WTC11 (cell line): ENCODE measurements at regions of chr2 and their contacts with region 1.

Region 1: GRCh38 chr2:238139196-238140039 is 950 bp downstream of the KLHL30 start:
- DNase-seq: peak; percentile 64
- ATAC-seq: peak; percentile 64
- H3K4me3 Mint-ChIP-seq: no peak overlapping the region
- H3K27ac Mint-ChIP-seq: no peak overlapping the region
- H3K4me1 Mint-ChIP-seq: no peaks in the 10 kb centered on the region
- H3K27me3 Mint-ChIP-seq: no peaks in the 10 kb centered on the region
- CTCF ChIP-seq: peak; percentile 97

Region 2: DNA sequence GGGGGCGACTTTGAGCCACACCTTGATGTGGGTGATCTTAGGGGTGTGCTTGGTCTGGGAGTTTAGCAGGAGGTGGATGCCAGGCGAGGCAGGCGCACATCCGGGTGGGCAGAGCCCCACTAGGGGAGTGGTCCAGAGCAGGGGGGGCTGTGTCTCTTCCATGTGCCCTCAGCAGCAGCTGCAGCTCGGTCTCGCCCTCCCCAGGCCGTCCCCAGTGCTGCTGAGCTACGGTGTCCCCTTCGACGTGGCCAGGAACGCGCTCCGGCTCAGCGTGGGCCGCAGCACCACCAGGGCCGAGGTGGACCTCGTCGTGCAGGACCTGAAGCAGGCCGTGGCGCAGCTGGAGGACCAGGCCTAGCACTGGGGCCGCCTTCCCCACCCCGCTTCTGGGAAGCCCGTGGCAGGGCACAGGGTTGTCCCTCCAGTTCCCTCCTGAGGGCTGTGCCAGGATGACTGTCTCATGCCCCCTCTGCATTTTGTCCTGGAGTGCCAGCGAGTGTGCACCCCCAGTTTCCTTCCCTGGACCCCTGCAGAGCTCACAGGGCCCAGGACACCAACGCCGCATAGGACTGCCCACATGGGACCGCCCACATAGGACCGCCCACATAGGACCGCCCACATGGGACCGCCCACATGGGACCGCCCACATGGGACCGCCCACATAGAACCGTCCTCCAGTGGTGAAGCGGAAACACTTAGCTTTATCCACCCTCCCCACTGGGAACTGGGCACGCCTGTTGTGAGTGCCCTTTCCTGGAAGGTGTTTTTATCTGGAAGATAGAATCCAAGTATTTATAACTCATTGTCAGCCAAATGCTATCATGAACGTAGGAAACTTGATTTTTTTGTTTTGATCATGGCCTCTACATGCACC is 41.2 kb before region 1 on chr2:
- CTCF ChIA-PET with region 1: interaction called, 12 read pairs
- POLR2A ChIA-PET with region 1: interaction called, 3 read pairs
- DNase-seq: peak; percentile 81
- ATAC-seq: peak; percentile 79
- H3K4me3 Mint-ChIP-seq: no peak overlapping the region
- H3K27ac Mint-ChIP-seq: peak overlapping the region; percentile 63; the same call in 1 of the 2 replicates
- H3K4me1 Mint-ChIP-seq: peaks cover 43% of the 10 kb centered on the region
- H3K27me3 Mint-ChIP-seq: no peaks in the 10 kb centered on the region
- CTCF ChIP-seq: no peak

Region 3: DNA sequence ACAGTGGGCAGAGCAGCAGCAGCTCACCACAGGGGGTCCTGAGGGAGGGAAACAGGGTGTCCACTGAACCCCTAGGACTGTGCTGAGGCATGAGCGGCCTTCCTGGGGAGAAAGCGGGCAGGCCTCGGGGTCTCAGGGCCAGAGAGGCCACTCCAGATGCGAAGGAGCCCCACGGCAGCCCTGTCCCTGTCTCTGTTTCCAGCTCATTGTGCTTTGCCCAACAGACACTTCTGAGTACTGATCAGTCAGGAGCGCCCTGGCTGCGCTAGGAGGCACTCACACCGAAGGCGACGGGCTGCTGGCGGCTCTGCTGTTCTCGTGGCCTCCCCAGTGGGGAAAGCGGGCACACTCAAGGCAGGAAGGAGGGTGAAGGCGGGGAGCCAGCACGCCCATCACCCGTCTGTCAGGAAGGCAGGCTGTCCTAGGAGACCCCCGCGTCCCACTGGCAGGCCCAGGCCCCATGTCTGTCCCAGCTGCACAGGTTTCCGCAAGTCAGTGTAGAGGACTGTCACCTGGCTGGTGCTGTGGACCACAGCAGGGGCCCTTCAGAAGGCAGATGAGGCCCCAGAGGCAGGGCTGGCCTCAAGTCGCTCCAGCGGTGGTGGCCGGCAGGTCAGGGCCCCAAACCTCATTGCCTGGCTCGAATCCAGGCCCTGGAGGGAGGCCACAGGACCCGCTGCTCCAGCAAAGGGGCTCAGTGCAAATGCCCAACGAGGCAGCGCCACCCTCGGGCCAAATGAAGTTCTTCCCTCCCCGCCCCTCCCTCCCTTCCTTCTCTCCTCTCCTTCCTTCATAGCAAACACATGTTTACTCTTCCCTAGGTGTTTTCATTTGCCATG is 32.5 kb before region 1 on chr2:
- CTCF ChIA-PET with region 1: interaction called, 16 read pairs
- POLR2A ChIA-PET with region 1: interaction called, 5 read pairs
- DNase-seq: peak; percentile 73
- ATAC-seq: peak; percentile 43
- H3K4me3 Mint-ChIP-seq: no peak overlapping the region
- H3K27ac Mint-ChIP-seq: no peak overlapping the region
- H3K4me1 Mint-ChIP-seq: peaks cover 21% of the 10 kb centered on the region
- H3K27me3 Mint-ChIP-seq: no peaks in the 10 kb centered on the region
- CTCF ChIP-seq: peak; percentile 23; the same call in 1 of the 2 replicates

Region 4: GRCh38 chr2:238120463-238121298 is 18.7 kb before region 1 on chr2:
- CTCF ChIA-PET with region 1: interaction called, 14 read pairs
- POLR2A ChIA-PET with region 1: interaction called, 4 read pairs
- DNase-seq: peak; percentile 49
- ATAC-seq: peak; percentile 75
- H3K4me3 Mint-ChIP-seq: no peak overlapping the region
- H3K27ac Mint-ChIP-seq: no peak overlapping the region
- H3K4me1 Mint-ChIP-seq: no peaks in the 10 kb centered on the region
- H3K27me3 Mint-ChIP-seq: no peaks in the 10 kb centered on the region
- CTCF ChIP-seq: no peak

Region 5: GRCh38 chr2:238127317-238128200 is 11.9 kb before region 1 on chr2:
- CTCF ChIA-PET with region 1: interaction called, 41 read pairs
- POLR2A ChIA-PET with region 1: no interaction called
- DNase-seq: no peak
- ATAC-seq: peak; percentile 46
- H3K4me3 Mint-ChIP-seq: no peak overlapping the region
- H3K27ac Mint-ChIP-seq: no peak overlapping the region
- H3K4me1 Mint-ChIP-seq: no peaks in the 10 kb centered on the region
- H3K27me3 Mint-ChIP-seq: no peaks in the 10 kb centered on the region
- CTCF ChIP-seq: no peak

Region 6: GRCh38 chr2:238152771-238153688 is 13.6 kb after region 1 on chr2:
- CTCF ChIA-PET with region 1: interaction called, 36 read pairs
- POLR2A ChIA-PET with region 1: no interaction called
- DNase-seq: peak; percentile 64
- ATAC-seq: no peak
- H3K4me3 Mint-ChIP-seq: no peak overlapping the region
- H3K27ac Mint-ChIP-seq: no peak overlapping the region
- H3K4me1 Mint-ChIP-seq: 0 out of 2 replicates have a peak, but pooled peaks cover 10% of the 10 kb centered on the region
- H3K27me3 Mint-ChIP-seq: peaks cover 8% of the 10 kb centered on the region
- CTCF ChIP-seq: peak; percentile 32; the same call in 1 of the 2 replicates